CD8-positive, alpha-beta memory T cell (primary cell): ENCODE measurements at regions of chr11 and their contacts with region 1.

Region 1: GRCh38 chr11:111766093-111766833 is at the start of gene PPP2R1B:
- DNase-seq: peak; percentile 65 to 82 (median 72)
- H3K4me3 ChIP-seq: peak within 1 kb of the TSS; percentile 87
- H3K4me3 Mint-ChIP-seq: peak within 1 kb of the TSS; percentile 92 to 100 (median 99)
- H3K27ac ChIP-seq: peak within 1 kb of the TSS; percentile 78
- H3K27ac Mint-ChIP-seq: peak within 1 kb of the TSS; percentile 21 to 99 (median 98)
- H3K4me1 ChIP-seq: peaks cover 24% of the 10 kb centered on the region
- H3K4me1 Mint-ChIP-seq: peaks cover 34 to 51% (median 48%) of the 10 kb centered on the region in 3 donors
- H3K27me3 ChIP-seq: no peaks in the 10 kb centered on the region
- H3K27me3 Mint-ChIP-seq: no peaks in the 10 kb centered on the region
- total RNA-seq, gene PPP2R1B: 55.3 to 61.6 TPM

Region 2: DNA sequence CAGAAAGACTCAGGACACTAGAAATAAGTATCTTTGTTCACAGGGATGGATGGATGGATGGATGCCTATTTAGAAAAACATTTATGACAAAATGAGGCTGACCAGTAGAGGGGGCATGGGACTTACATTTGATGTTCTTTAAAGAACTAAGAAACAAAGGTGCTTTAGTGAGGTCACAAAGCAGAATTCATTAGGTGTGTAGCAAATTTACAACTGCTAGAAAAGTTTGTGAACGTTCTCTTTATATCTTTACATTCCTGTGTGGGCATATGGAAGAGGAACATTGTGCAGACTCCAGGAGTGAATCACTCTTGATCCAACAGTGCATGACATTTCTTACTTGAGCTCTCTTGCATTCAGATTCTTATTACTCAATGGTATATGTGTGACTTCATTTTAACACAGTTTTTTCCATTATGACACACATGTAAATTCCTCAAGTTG is 179.9 kb before region 1 on chr11:
- CTCF ChIA-PET with region 1: interaction called, 14 read pairs
- POLR2A ChIA-PET with region 1: interaction called, 3 read pairs
- DNase-seq: peak; percentile 22 to 55 (median 40)
- H3K4me3 ChIP-seq: no peak overlapping the region
- H3K4me3 Mint-ChIP-seq: no peak overlapping the region
- H3K27ac ChIP-seq: no peak overlapping the region
- H3K27ac Mint-ChIP-seq: no peak overlapping the region
- H3K4me1 ChIP-seq: no peaks in the 10 kb centered on the region
- H3K4me1 Mint-ChIP-seq: no peaks in the 10 kb centered on the region
- H3K27me3 ChIP-seq: no peaks in the 10 kb centered on the region
- H3K27me3 Mint-ChIP-seq: peaks cover 0 to 2% of the 10 kb centered on the region in 2 donors

Region 3: GRCh38 chr11:111749646-111750045 is 16.6 kb before region 1 on chr11:
- CTCF ChIA-PET with region 1: interaction called, 3 read pairs
- POLR2A ChIA-PET with region 1: interaction called, 11 read pairs
- DNase-seq: no peak
- H3K4me3 ChIP-seq: no peak overlapping the region
- H3K4me3 Mint-ChIP-seq: no peak overlapping the region
- H3K27ac ChIP-seq: no peak overlapping the region
- H3K27ac Mint-ChIP-seq: no peak overlapping the region
- H3K4me1 ChIP-seq: no peaks in the 10 kb centered on the region
- H3K4me1 Mint-ChIP-seq: peaks cover 2 to 9% (median 3%) of the 10 kb centered on the region in 3 donors
- H3K27me3 ChIP-seq: no peaks in the 10 kb centered on the region
- H3K27me3 Mint-ChIP-seq: no peaks in the 10 kb centered on the region

Region 4: GRCh38 chr11:111777094-111778046 is 11.1 kb after region 1 on chr11:
- CTCF ChIA-PET with region 1: interaction called, 43 read pairs
- POLR2A ChIA-PET with region 1: no interaction called
- DNase-seq: peak in 3 of 5 donors; percentile 1 to 54 (median 48)
- H3K4me3 ChIP-seq: no peak overlapping the region
- H3K4me3 Mint-ChIP-seq: no peak overlapping the region
- H3K27ac ChIP-seq: no peak overlapping the region
- H3K27ac Mint-ChIP-seq: peak overlapping the region in 1 of 8 donors; percentile 64
- H3K4me1 ChIP-seq: no peaks in the 10 kb centered on the region
- H3K4me1 Mint-ChIP-seq: no peaks in the 10 kb centered on the region
- H3K27me3 ChIP-seq: no peaks in the 10 kb centered on the region
- H3K27me3 Mint-ChIP-seq: no peaks in the 10 kb centered on the region

Region 5: GRCh38 chr11:111878849-111879636 is 112.8 kb after region 1 on chr11 and contains the starts of genes CFAP68 and FDXACB1:
- CTCF ChIA-PET with region 1: no interaction called
- POLR2A ChIA-PET with region 1: no interaction called
- DNase-seq: peak; percentile 90 to 99 (median 97)
- H3K4me3 ChIP-seq: peak within 1 kb of the TSS; percentile 84
- H3K4me3 Mint-ChIP-seq: peak within 1 kb of the TSS; percentile 88 to 98 (median 94)
- H3K27ac ChIP-seq: peak within 1 kb of the TSS; percentile 100
- H3K27ac Mint-ChIP-seq: peak within 1 kb of the TSS; percentile 95 to 100 (median 100)
- H3K4me1 ChIP-seq: peaks cover 18% of the 10 kb centered on the region
- H3K4me1 Mint-ChIP-seq: peaks cover 15 to 34% (median 17%) of the 10 kb centered on the region in 3 donors
- H3K27me3 ChIP-seq: no peaks in the 10 kb centered on the region
- H3K27me3 Mint-ChIP-seq: no peaks in the 10 kb centered on the region
- total RNA-seq, gene CFAP68: 36.7 to 44.3 TPM
- total RNA-seq, gene FDXACB1: 11.6 to 12.7 TPM